A549 (cell line): ENCODE measurements at regions of chrX and their contacts with region 1.

Region 1: GRCh38 chrX:30308263-30309138 is 689 bp downstream of the NR0B1 start:
- DNase-seq: peak; percentile 46 to 86
- ATAC-seq: peak; percentile 87
- H3K4me3 ChIP-seq: peak overlapping the region; percentile 83
- H3K27ac ChIP-seq: peak overlapping the region; percentile 88 to 97
- H3K4me1 ChIP-seq: peaks cover 23% of the 10 kb centered on the region
- CTCF ChIP-seq: peak; percentile 65
- EP300 ChIP-seq: no peak
- POLR2A ChIP-seq: peak; percentile 35
- RAD21 ChIP-seq: peak; percentile 37 to 60; a peak in 4 of 5 replicates

Region 2: DNA sequence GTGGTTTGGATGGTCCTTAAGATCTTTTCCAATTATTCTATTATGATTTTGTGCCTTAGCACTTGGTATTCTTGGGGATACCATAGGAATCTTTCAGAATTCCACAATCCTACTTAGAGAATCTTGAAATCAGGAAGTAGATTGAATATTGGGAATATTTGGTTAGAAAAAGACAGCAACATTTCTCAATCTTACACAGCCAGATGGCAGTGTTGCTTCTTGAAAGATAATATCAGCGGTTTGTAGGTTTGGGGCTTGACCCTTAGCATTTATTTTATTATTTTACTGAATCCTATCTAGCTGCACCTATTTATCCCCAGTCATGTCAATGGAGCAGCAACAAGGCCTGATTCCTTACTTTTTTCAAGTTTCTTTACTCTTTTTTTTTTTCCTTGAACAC is 33.0 kb before region 1 on chrX:
- CTCF ChIA-PET with region 1: interaction called, 17 read pairs
- POLR2A ChIA-PET with region 1: no interaction called
- DNase-seq: peak in 1 of 2 experiments; percentile 55
- ATAC-seq: peak; percentile 39 to 79; a peak in 4 of 6 replicates
- H3K4me3 ChIP-seq: no peak overlapping the region
- H3K27ac ChIP-seq: no peak overlapping the region
- H3K4me1 ChIP-seq: peaks cover 3% of the 10 kb centered on the region; the same call in 1 of the 3 replicates
- CTCF ChIP-seq: peak; percentile 66
- EP300 ChIP-seq: no peak
- POLR2A ChIP-seq: no peak
- RAD21 ChIP-seq: peak; percentile 86 to 87

Region 3: GRCh38 chrX:30283431-30284200 is 24.9 kb before region 1 on chrX:
- CTCF ChIA-PET with region 1: interaction called, 10 read pairs
- POLR2A ChIA-PET with region 1: interaction called, 6 read pairs
- DNase-seq: peak; percentile 76 to 93
- ATAC-seq: peak; percentile 94 to 95
- H3K4me3 ChIP-seq: no peak overlapping the region; the same call in 2 of the 3 replicates
- H3K27ac ChIP-seq: peak overlapping the region; percentile 96 to 97
- H3K4me1 ChIP-seq: peaks cover 28% of the 10 kb centered on the region
- CTCF ChIP-seq: no peak
- EP300 ChIP-seq: peak; percentile 24 to 49; a peak in 2 of 5 replicates
- POLR2A ChIP-seq: no peak
- RAD21 ChIP-seq: no peak

Region 4: DNA sequence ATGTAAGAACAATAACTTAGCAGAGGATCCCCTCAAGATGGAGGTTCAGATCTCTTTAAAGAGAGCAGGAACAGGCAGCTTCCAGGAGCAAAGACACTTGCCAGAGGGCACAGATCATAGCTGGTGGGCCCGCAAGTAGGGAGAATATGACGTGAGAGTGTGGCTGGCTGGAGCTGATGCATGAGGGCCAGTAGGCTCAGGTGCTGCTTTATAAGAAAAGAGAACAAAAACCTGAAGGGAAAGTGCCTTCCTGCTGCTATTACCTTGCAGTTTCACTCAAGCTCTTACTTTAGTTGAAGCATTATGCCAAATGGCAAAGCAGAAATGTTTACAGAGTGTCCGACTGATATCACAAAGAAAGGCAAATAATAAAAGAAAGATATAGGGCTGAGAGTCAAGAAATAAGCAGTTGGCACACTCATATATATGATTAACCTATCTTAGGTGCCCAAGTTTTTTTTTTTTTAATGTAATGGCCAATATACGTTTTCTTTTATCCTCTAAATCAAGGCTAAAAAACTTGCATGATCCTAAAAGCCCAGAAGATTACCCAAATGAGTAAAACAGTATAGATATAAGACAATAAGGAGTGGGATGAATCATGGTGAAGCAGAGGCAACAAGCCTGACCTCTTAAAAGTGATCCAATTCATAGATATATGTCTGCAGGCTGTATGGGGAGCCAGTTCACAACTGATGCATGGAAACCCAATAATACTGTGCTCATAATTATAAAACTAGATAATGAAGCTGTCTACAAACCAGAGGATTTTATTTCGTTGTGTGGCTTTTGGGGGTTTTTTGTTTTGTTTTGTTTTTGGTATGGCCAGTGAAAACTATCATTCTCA is 11.9 kb before region 1 on chrX:
- CTCF ChIA-PET with region 1: interaction called, 11 read pairs
- POLR2A ChIA-PET with region 1: no interaction called
- DNase-seq: no peak
- ATAC-seq: no peak
- H3K4me3 ChIP-seq: no peak overlapping the region
- H3K27ac ChIP-seq: no peak overlapping the region; a peak in 1 of 6 replicates
- H3K4me1 ChIP-seq: peaks cover 18% of the 10 kb centered on the region
- CTCF ChIP-seq: no peak
- EP300 ChIP-seq: no peak
- POLR2A ChIP-seq: no peak
- RAD21 ChIP-seq: no peak

Region 5: GRCh38 chrX:30489323-30489722 is 180.8 kb after region 1 on chrX:
- CTCF ChIA-PET with region 1: interaction called, 10 read pairs
- POLR2A ChIA-PET with region 1: no interaction called
- DNase-seq: peak; percentile 9 to 49
- ATAC-seq: peak; percentile 81 to 91
- H3K4me3 ChIP-seq: no peak overlapping the region
- H3K27ac ChIP-seq: no peak overlapping the region
- H3K4me1 ChIP-seq: no peaks in the 10 kb centered on the region
- CTCF ChIP-seq: no peak
- EP300 ChIP-seq: no peak
- POLR2A ChIP-seq: no peak
- RAD21 ChIP-seq: peak in 1 of 2 experiments; percentile 53; a peak in 3 of 5 replicates